ENCODE measurements at regions of chr13 and their contacts with region 1.

Region 1: DNA sequence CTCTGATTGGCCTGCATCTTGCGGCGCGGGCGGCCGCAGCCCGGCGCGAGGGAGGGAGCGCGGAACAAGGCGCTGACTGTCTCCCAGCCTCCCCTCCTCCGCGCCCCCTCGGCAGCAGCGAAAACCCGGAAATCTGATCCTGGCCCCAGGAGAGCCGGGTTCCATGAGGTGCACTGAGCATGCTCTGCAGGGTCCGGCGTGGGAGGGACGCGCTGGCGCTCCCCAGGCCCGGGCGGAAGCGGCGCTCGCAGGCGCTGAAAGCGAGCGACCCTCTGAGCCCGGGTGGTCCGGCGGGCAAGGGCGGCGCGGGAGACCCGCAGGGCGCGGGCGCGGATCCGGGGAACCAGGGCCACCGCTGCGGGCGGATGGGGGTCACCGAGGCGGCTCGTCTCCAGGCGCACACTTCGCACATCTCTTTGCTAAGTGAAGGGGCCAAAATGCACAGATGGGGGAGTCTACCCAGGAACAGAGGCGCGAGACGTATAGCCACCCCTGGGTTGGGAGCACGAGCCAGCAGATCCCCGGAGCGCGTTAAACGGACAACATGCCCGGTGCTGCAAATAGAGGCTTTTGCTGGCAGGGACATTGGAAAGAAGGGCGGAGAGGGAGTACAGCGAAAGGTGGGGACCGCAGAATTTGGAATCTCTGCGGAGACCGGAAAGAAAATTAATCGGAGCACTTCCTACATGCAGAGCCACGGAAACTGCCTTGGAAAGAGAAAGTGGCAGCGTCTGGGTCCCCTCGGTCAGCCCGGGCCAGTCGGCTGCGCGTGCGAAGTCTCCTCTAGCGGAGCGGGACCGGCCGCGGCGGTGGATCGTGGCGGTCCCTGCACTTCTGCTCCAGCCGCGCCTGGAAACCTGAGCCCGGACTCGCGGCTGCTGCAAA is 510 bp upstream of the PCDH9 start:
- DNase-seq: peak; percentile 84
- ATAC-seq: peak; percentile 94
- H3K4me3 Mint-ChIP-seq: no peak overlapping the region
- H3K27ac Mint-ChIP-seq: peak overlapping the region; percentile 78
- H3K4me1 Mint-ChIP-seq: peaks cover 19% of the 10 kb centered on the region
- H3K27me3 Mint-ChIP-seq: peaks cover 6% of the 10 kb centered on the region
- CTCF ChIP-seq: no peak

Region 2: GRCh38 chr13:65892859-65893258 is 1337.8 kb before region 1 on chr13:
- CTCF ChIA-PET with region 1: no interaction called
- POLR2A ChIA-PET with region 1: no interaction called
- intact Hi-C with region 1: no loop called
- DNase-seq: no peak
- ATAC-seq: no peak
- H3K4me3 Mint-ChIP-seq: no peak overlapping the region
- H3K27ac Mint-ChIP-seq: no peak overlapping the region
- H3K4me1 Mint-ChIP-seq: no peaks in the 10 kb centered on the region
- H3K27me3 Mint-ChIP-seq: no peaks in the 10 kb centered on the region
- CTCF ChIP-seq: no peak

Region 3: GRCh38 chr13:67075239-67075638 is 155.4 kb before region 1 on chr13:
- CTCF ChIA-PET with region 1: no interaction called
- POLR2A ChIA-PET with region 1: no interaction called
- intact Hi-C with region 1: loop called (anchors 5 kb)
- DNase-seq: no peak
- ATAC-seq: no peak
- H3K4me3 Mint-ChIP-seq: no peak overlapping the region
- H3K27ac Mint-ChIP-seq: no peak overlapping the region
- H3K4me1 Mint-ChIP-seq: peaks cover 12% of the 10 kb centered on the region
- H3K27me3 Mint-ChIP-seq: no peaks in the 10 kb centered on the region
- CTCF ChIP-seq: no peak